Right lobe of liver (tissue), 6 donors: ENCODE measurements at regions of chr6 and their contacts with region 1.

Region 1: DNA sequence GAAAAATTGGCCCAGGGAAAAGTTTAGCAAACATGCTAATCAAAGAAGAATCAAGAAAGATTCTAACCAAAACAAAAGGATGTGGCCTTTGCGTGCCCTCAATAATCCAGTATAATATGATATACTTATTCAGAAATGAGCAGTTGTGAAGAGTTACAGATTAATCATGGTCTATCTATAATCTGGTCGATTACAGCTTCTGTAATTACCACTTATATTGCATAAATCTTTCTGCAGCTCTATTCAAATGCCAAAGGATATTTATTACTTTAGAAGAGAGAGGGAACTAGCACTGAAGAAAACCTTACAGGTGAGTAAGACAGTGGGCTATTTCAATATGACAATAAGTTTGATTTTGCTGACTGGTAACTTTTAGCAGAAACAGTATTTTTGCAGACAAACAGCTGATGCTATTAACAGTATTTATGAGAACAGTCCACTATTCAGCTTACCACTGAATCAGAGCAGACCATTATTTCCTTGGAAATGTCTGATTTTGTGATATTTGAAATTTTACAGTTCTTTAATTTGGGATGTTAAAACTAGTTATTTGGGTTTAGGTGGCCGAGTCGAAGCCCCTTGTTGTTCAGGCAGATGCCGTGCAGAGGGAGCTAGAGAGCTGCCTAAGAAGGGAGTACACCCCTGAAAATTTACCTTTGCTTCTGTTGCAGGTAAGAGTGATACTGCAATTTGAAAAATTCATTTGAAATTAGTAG is 92.2 kb downstream of the CEP57L1 start:
- DNase-seq: peak; percentile 49 to 62 (median 61)
- ATAC-seq: peak; percentile 94 to 99 (median 94)
- H3K4me3 ChIP-seq: no peak overlapping the region
- H3K27ac ChIP-seq: no peak overlapping the region
- H3K4me1 ChIP-seq: no peaks in the 10 kb centered on the region
- H3K27me3 ChIP-seq: no peaks in the 10 kb centered on the region
- CTCF ChIP-seq: peak; percentile 90 to 95 (median 94)
- POLR2A ChIP-seq: no peak

Region 2: DNA sequence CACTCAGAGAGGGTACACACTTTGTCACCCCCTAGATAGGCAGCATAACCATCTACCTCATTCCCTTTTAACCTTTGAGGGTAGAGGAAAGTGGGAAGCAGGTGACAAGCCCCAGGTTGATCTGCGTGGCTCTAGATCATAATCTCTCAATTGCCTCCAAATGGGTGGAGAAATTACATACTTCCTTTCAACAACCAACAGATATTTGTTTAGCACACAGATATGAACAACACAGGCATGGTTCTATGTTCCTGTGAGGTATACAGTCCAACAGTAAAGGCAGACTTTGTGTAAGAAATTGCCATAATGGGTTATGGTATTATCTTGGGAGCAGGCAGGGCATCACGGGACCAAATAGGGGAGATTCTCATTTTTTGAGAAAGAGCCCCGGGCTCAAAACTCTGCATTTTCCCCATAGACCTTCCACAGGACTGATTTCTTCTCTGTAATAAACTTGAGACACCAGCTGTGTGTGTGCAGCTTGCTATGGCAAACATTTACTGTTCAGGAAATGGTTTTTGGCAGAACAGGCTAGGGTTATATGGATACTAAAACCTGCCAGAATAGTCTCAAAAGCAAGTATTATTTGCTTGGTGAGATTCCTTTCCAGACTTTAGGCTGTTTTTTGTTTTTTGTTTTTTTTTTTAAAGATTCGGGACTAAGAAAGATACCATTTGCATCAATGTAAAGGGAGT is 68.5 kb after region 1 on chr6:
- intact Hi-C with region 1: no loop called
- DNase-seq: no peak
- ATAC-seq: peak in 2 of 4 donors; percentile 12 to 25
- H3K4me3 ChIP-seq: no peak overlapping the region
- H3K27ac ChIP-seq: no peak overlapping the region
- H3K4me1 ChIP-seq: peaks cover 0 to 26% (median 12%) of the 10 kb centered on the region in 4 donors
- H3K27me3 ChIP-seq: no peaks in the 10 kb centered on the region
- CTCF ChIP-seq: no peak
- POLR2A ChIP-seq: no peak

Region 3: GRCh38 chr6:109382576-109383437 is 195.2 kb after region 1 on chr6:
- intact Hi-C with region 1: loop called in 1 of 2 experiments (anchors 10 kb)
- DNase-seq: peak; percentile 93 to 96 (median 95)
- ATAC-seq: peak; percentile 81 to 88 (median 85)
- H3K4me3 ChIP-seq: peak overlapping the region; percentile 81 to 92 (median 91)
- H3K27ac ChIP-seq: peak overlapping the region; percentile 99 to 100 (median 100)
- H3K4me1 ChIP-seq: peaks cover 0 to 37% (median 8%) of the 10 kb centered on the region in 4 donors
- H3K27me3 ChIP-seq: no peaks in the 10 kb centered on the region
- CTCF ChIP-seq: peak; percentile 55 to 62 (median 56)
- POLR2A ChIP-seq: peak; percentile 70

Region 4: GRCh38 chr6:109397020-109397419 is 209.5 kb after region 1 on chr6:
- intact Hi-C with region 1: loop called in 1 of 2 experiments (anchors 5 kb)
- DNase-seq: no peak
- ATAC-seq: peak; percentile 69 to 84 (median 78)
- H3K4me3 ChIP-seq: no peak overlapping the region
- H3K27ac ChIP-seq: no peak overlapping the region
- H3K4me1 ChIP-seq: no peaks in the 10 kb centered on the region
- H3K27me3 ChIP-seq: no peaks in the 10 kb centered on the region
- CTCF ChIP-seq: peak; percentile 40 to 49 (median 41)
- POLR2A ChIP-seq: no peak